GM12878 (cell line): ENCODE measurements at regions of chr10 and their contacts with region 1.

Region 1: DNA sequence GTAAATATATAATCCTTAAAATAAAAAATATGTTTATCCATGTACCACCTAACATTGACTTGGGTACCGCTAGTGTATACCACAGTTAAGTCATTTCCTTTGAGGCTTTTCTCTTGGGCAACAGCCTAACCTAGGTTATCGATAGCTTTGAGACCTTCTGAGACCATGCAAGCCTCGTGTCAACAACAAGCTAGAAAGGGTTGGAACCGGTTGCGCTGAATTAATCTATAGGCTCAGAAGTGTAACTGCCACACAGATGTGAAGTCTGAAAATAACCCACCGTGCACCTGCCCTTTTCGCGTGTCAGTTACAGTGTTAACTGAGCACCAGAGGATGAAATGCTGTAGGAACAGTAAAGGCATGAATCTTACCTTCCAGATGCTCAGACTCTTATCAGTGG is 59.8 kb downstream of the ARID5B start:
- DNase-seq: peak; percentile 72
- ATAC-seq: peak; percentile 68
- H3K4me3 ChIP-seq: no peak overlapping the region
- H3K27ac ChIP-seq: peak overlapping the region; percentile 85
- H3K4me1 ChIP-seq: peaks cover 67% of the 10 kb centered on the region
- H3K27me3 ChIP-seq: no peaks in the 10 kb centered on the region
- CTCF ChIP-seq: no peak
- EP300 ChIP-seq: peak in 1 of 2 experiments; percentile 55; a peak in 1 of 4 replicates
- POLR2A ChIP-seq: peak; percentile 36; the same call in 1 of the 2 replicates
- RAD21 ChIP-seq: 0 out of 2 replicates have a peak, but pooled peaks have one; percentile 1

Region 2: GRCh38 chr10:61903221-61903927 is 57.9 kb before region 1 on chr10:
- CTCF ChIA-PET with region 1: interaction called, 10 read pairs
- POLR2A ChIA-PET with region 1: no interaction called
- RAD21 ChIA-PET with region 1: interaction called, 4 read pairs
- SMC1A ChIA-PET with region 1: interaction called, 6 read pairs
- in situ Hi-C with region 1: no loop called
- intact Hi-C with region 1: loop called (anchors 1 kb)
- DNase-seq: peak; percentile 53
- ATAC-seq: peak; percentile 65
- H3K4me3 ChIP-seq: peak overlapping the region; percentile 85
- H3K27ac ChIP-seq: peak overlapping the region; percentile 96
- H3K4me1 ChIP-seq: peaks cover 20% of the 10 kb centered on the region
- H3K27me3 ChIP-seq: no peaks in the 10 kb centered on the region
- CTCF ChIP-seq: peak; percentile 0 to 17 (median 12); a peak in 3 of 6 replicates
- EP300 ChIP-seq: peak; percentile 48 to 69; a peak in 2 of 4 replicates
- POLR2A ChIP-seq: peak; percentile 76
- RAD21 ChIP-seq: no peak

Region 3: DNA sequence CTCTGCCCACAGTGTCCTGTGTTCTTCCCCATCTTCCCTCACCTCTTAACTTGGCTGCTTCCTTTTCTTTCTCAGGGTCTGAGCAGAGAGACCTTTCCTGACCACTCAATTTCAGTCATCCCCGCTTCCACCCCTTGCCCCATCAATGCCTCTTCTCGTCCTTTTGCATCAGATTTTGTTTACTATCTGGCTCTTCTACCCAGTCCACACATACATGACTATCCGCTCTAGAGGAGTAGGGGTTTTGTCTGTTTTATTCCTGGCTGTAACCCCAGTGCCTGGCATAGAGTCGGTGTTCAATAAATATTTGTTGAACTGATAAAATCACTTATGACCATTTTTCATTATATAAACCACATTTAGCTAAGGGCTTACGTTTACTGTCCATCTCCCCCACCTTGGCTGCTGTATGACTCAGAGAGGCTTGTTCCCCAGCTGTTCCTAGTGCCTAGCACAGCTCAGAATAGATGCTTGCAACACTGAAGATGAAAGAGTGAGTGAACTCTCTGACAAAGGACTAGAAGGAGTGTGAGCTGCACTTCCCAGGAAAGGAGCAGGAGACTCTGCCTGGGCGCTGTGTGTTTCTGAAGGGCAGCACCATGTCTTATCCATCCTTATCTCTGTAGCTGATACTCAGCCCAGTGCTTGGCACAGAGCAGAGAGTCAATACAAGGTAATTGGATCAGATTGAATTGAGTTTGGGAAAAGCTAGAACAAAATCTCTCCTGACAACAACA is 37.9 kb before region 1 on chr10:
- CTCF ChIA-PET with region 1: no interaction called
- POLR2A ChIA-PET with region 1: no interaction called
- RAD21 ChIA-PET with region 1: no interaction called
- SMC1A ChIA-PET with region 1: no interaction called
- in situ Hi-C with region 1: no loop called
- intact Hi-C with region 1: no loop called
- DNase-seq: no peak
- ATAC-seq: no peak
- H3K4me3 ChIP-seq: no peak overlapping the region
- H3K27ac ChIP-seq: no peak overlapping the region
- H3K4me1 ChIP-seq: no peaks in the 10 kb centered on the region
- H3K27me3 ChIP-seq: no peaks in the 10 kb centered on the region
- CTCF ChIP-seq: no peak
- EP300 ChIP-seq: no peak
- POLR2A ChIP-seq: no peak
- RAD21 ChIP-seq: no peak

Region 4: GRCh38 chr10:61974601-61975390 is 13.5 kb after region 1 on chr10:
- CTCF ChIA-PET with region 1: interaction called, 3 read pairs
- POLR2A ChIA-PET with region 1: no interaction called
- RAD21 ChIA-PET with region 1: interaction called, 5 read pairs
- SMC1A ChIA-PET with region 1: interaction called, 17 read pairs
- in situ Hi-C with region 1: no loop called
- intact Hi-C with region 1: no loop called
- DNase-seq: no peak
- ATAC-seq: peak; percentile 28
- H3K4me3 ChIP-seq: no peak overlapping the region
- H3K27ac ChIP-seq: peak overlapping the region; percentile 74
- H3K4me1 ChIP-seq: peaks cover 45% of the 10 kb centered on the region
- H3K27me3 ChIP-seq: no peaks in the 10 kb centered on the region
- CTCF ChIP-seq: no peak
- EP300 ChIP-seq: no peak
- POLR2A ChIP-seq: no peak
- RAD21 ChIP-seq: no peak

Region 5: DNA sequence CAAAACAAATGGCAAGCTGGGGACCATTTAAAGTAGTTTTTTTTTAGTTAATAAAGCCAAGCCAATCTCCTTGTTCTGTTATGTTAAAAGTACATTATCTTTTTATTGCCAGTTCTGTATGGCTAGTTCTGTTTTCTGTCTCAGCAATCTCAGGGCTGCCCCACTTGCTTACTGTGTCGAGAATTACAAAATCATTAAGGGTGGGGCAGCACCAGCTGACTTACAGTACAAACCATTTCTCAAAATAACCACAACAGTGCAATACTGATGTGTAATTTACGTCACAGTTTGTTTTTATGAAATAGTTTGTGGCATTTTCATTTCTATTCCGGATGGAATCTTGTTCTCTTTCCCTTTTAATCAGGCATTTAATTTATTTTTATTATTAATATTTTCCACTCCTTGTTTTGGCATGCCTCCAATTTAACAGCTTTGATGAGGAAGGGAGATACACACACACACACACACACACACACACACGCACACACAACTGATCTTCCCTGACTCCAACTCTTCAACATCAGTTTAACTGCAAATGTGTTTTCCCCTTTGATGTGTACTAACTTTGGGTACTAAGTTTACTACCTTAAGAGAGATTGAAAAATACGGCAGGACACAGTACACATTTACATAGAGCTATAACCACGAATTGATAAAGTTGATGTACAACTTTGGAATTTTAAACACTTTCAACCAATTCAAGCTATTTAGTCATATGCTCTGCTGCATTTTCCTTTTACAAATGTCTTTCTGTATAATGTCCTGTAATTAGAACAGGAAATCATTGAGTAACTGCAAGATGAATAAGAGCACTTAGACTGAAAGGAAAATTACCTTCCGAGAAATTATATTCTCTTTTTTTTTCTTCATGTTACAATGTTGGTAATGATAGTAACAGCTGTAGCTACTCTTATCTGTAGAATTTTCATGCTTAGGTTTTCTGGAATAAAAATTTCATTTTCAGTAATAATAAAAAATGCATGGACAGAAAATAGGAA is 31.7 kb after region 1 on chr10:
- CTCF ChIA-PET with region 1: no interaction called
- POLR2A ChIA-PET with region 1: interaction called, 4 read pairs
- RAD21 ChIA-PET with region 1: interaction called, 4 read pairs
- SMC1A ChIA-PET with region 1: interaction called, 8 read pairs
- in situ Hi-C with region 1: no loop called
- intact Hi-C with region 1: loop called (anchors 1 kb)
- DNase-seq: peak; percentile 42
- ATAC-seq: peak; percentile 76
- H3K4me3 ChIP-seq: peak overlapping the region; percentile 33; the same call in 1 of the 2 replicates
- H3K27ac ChIP-seq: peak overlapping the region; percentile 88
- H3K4me1 ChIP-seq: peaks cover 35% of the 10 kb centered on the region
- H3K27me3 ChIP-seq: no peaks in the 10 kb centered on the region
- CTCF ChIP-seq: no peak
- EP300 ChIP-seq: peak; percentile 88 to 93; a peak in 3 of 4 replicates
- POLR2A ChIP-seq: no peak
- RAD21 ChIP-seq: no peak